CD4-positive, alpha-beta T cell (primary cell): ENCODE measurements at regions of chr18 and their contacts with region 1.

Region 1: DNA sequence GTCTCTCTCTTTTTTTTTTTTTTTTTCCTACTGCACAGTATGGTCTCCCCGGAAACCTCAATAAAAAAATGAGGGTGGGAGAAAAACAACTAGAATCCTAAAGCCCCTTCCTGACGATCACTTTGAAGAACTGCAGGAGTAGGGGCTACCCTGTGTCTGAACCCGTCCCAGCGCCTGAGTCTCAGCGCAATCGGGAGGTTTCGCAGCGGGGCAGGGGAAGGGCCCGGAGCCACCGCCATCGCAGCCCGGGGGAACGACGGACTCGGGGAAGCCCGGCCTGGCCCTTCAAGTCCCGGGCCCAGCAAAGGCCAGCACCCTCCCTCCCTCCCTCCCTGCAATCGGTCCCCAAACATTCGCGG is 411 bp downstream of the NARS1 start:
- DNase-seq: peak in 2 of 14 experiments; percentile 11 to 13
- ATAC-seq: peak; percentile 11
- H3K4me3 ChIP-seq: peak overlapping the region; percentile 91
- H3K4me3 Mint-ChIP-seq: peak overlapping the region; percentile 95
- H3K27ac ChIP-seq: peak overlapping the region; percentile 70 to 91
- H3K27ac Mint-ChIP-seq: peak overlapping the region; percentile 98
- H3K4me1 ChIP-seq: peaks cover 33% of the 10 kb centered on the region
- H3K4me1 Mint-ChIP-seq: peaks cover 33% of the 10 kb centered on the region
- H3K27me3 ChIP-seq: no peaks in the 10 kb centered on the region
- H3K27me3 Mint-ChIP-seq: no peaks in the 10 kb centered on the region
- CTCF ChIP-seq: no peak

Region 2: DNA sequence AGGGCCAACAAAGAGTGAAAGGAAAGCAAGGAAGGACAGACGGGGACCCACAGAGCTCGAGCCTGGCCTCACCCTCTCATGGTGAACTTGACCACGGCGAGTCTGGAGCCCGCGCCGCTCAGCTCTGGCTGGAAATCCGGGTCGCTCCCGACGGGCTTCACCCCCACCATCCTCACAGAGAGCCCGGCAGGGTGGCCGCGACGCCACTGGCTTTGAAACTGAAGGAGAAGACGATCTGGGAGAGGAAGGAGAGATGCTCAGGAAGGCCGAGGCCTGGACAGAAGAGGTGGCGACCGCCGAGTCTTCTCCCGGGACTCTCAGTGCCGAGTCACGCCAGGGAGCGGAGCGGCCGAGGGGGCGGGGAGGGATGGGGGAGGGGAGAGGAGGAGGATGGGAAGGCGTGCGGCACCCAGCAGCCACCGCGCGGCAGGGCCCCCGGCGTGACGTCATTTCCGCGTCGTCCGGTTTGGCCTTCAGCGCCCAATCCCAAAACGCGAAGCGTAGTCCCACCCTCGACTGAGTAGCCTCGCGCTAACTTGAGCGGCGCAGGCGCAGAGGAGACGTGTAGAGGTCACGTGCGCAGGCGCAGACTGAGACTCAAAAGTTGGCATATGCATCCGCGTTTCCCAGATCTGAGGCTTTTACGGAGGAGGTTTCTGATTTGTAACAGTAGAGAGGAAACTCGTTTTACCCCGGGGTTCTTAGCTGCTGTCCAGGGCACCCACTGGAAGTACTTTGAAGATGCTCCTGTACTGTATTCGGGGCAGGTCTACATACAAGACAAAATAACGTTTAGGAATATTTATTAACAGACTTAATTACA is 982.7 kb before region 1 on chr18 and contains the start of gene TXNL1:
- CTCF ChIA-PET with region 1: no interaction called
- POLR2A ChIA-PET with region 1: interaction called, 3 read pairs
- intact Hi-C with region 1: loop called in 1 of 2 experiments (anchors 5 kb)
- DNase-seq: peak; percentile 97 to 100 (median 99)
- ATAC-seq: peak; percentile 95
- H3K4me3 ChIP-seq: peak within 1 kb of the TSS; percentile 94
- H3K4me3 Mint-ChIP-seq: peak within 1 kb of the TSS; percentile 95
- H3K27ac ChIP-seq: peak within 1 kb of the TSS; percentile 83 to 91
- H3K27ac Mint-ChIP-seq: peak within 1 kb of the TSS; percentile 92
- H3K4me1 ChIP-seq: peaks cover 16% of the 10 kb centered on the region
- H3K4me1 Mint-ChIP-seq: peaks cover 52% of the 10 kb centered on the region
- H3K27me3 ChIP-seq: no peaks in the 10 kb centered on the region
- H3K27me3 Mint-ChIP-seq: no peaks in the 10 kb centered on the region
- CTCF ChIP-seq: no peak
- total RNA-seq, gene TXNL1: 41.5 to 41.6 TPM

Region 3: GRCh38 chr18:56645415-56646016 is 975.7 kb before region 1 on chr18:
- CTCF ChIA-PET with region 1: no interaction called
- POLR2A ChIA-PET with region 1: interaction called, 8 read pairs
- intact Hi-C with region 1: loop called in 1 of 2 experiments (anchors 5 kb)
- DNase-seq: peak in 3 of 14 experiments; percentile 54 to 60 (median 56)
- ATAC-seq: peak; percentile 51
- H3K4me3 ChIP-seq: no peak overlapping the region
- H3K4me3 Mint-ChIP-seq: no peak overlapping the region
- H3K27ac ChIP-seq: no peak overlapping the region
- H3K27ac Mint-ChIP-seq: no peak overlapping the region
- H3K4me1 ChIP-seq: peaks cover 5% of the 10 kb centered on the region
- H3K4me1 Mint-ChIP-seq: peaks cover 7% of the 10 kb centered on the region
- H3K27me3 ChIP-seq: no peaks in the 10 kb centered on the region
- H3K27me3 Mint-ChIP-seq: no peaks in the 10 kb centered on the region
- CTCF ChIP-seq: peak; percentile 73

Region 4: DNA sequence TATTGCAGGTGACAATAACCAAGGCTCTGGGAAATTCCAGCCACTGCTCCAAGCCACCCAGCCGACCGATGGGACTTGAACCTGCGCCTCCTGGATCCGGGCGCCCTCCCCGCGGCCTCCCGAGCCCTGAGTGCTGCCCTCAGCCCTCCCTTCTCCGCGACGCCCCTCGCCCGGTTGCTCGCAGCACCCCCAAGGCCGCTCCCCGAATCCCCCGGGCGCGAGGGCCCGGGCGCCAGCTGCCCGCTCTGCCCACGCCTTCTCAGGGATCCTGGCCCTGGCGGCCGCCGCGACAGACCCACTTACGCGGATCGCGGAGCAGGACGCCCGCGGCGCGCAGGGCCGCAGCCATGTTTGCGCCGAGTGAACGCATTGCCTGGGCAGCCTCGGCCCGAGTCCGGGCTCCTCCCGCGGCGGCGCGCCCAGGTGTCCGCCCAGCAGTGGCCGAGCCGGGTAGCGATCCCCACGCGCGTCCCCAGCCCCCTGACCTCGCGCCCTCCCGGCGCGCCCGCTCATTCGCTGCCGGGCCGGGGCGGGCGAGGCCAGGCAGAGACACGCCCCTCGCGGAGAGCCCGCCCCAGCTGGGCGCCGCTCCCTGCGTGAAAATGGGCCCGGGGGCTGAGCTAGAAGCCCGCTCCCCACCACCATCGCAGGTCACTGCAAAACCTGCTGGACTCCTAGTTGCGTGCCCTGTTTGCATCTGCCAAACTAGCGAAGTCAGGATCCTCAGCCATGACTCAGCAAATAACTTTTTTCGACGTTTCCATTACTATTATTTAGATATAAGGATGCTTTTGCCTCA is 34.8 kb before region 1 on chr18 and contains the start of gene FECH:
- CTCF ChIA-PET with region 1: no interaction called
- POLR2A ChIA-PET with region 1: interaction called, 15 read pairs
- intact Hi-C with region 1: loop called (anchors 1 to 5 kb)
- DNase-seq: peak; percentile 18 to 84 (median 60)
- ATAC-seq: peak; percentile 94
- H3K4me3 ChIP-seq: peak within 1 kb of the TSS; percentile 74
- H3K4me3 Mint-ChIP-seq: peak within 1 kb of the TSS; percentile 93
- H3K27ac ChIP-seq: no peak within 1 kb of the TSS
- H3K27ac Mint-ChIP-seq: peak within 1 kb of the TSS; percentile 76
- H3K4me1 ChIP-seq: peaks cover 17% of the 10 kb centered on the region
- H3K4me1 Mint-ChIP-seq: peaks cover 28% of the 10 kb centered on the region
- H3K27me3 ChIP-seq: no peaks in the 10 kb centered on the region
- H3K27me3 Mint-ChIP-seq: no peaks in the 10 kb centered on the region
- CTCF ChIP-seq: no peak
- total RNA-seq, gene FECH: 7.5 to 8.1 TPM

Region 5: GRCh38 chr18:58128381-58129374 is 507.5 kb after region 1 on chr18:
- CTCF ChIA-PET with region 1: no interaction called
- POLR2A ChIA-PET with region 1: no interaction called
- intact Hi-C with region 1: loop called in 1 of 2 experiments (anchors 10 kb)
- DNase-seq: no peak
- ATAC-seq: no peak
- H3K4me3 ChIP-seq: no peak overlapping the region
- H3K4me3 Mint-ChIP-seq: no peak overlapping the region
- H3K27ac ChIP-seq: no peak overlapping the region
- H3K27ac Mint-ChIP-seq: no peak overlapping the region
- H3K4me1 ChIP-seq: peaks cover 2% of the 10 kb centered on the region
- H3K4me1 Mint-ChIP-seq: no peaks in the 10 kb centered on the region
- H3K27me3 ChIP-seq: no peaks in the 10 kb centered on the region
- H3K27me3 Mint-ChIP-seq: peaks cover 17% of the 10 kb centered on the region
- CTCF ChIP-seq: no peak

Region 6: DNA sequence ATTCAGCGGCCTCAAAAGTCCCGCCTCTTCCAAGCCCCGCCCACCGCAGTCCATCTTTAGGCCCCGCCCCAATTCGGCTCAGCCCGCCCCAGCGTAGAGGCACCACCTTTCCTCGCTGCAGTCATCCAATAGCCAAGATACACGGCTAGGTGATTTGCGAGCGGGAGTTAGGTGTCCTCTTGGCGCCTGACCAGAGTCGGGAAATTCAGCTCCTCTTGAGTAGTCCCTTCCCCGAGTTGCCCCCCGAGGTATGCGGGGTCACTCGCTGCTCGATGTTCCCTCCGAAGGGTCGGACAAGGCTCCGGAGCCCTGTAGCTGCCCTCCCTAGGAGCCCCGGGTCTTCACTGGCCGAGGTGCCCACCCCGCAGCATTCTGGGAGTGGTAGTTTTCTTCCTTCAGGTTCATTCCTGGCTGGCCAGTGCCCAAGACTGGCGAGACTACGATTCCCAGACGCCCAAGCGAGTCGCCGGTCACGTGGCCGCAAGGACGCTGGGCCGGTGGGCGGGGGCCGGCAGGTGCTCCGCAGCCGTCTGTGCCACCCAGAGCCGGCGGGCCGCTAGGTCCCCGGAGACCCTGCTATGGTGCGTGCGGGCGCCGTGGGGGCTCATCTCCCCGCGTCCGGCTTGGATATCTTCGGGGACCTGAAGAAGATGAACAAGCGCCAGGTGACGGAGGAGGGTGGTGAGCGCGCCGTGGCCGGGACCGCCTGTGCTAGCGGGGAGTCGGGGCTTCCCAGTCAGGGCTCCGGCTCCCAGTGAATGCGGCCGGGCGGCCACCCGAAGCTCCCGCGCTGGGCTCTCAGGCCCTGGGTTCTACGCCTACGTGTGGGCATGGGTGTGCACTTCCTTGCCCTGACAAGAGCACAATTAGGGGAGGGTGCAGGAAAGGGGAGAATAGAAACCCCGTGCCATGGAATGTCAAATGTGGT is 1518.4 kb after region 1 on chr18 and contains the start of gene SEC11C:
- CTCF ChIA-PET with region 1: no interaction called
- POLR2A ChIA-PET with region 1: no interaction called
- intact Hi-C with region 1: loop called in 1 of 2 experiments (anchors 5 kb)
- DNase-seq: peak; percentile 91 to 98 (median 94)
- ATAC-seq: peak; percentile 87
- H3K4me3 ChIP-seq: peak within 1 kb of the TSS; percentile 78
- H3K4me3 Mint-ChIP-seq: peak within 1 kb of the TSS; percentile 93
- H3K27ac ChIP-seq: peak within 1 kb of the TSS; percentile 94 to 99
- H3K27ac Mint-ChIP-seq: peak within 1 kb of the TSS; percentile 98
- H3K4me1 ChIP-seq: peaks cover 32% of the 10 kb centered on the region
- H3K4me1 Mint-ChIP-seq: peaks cover 38% of the 10 kb centered on the region
- H3K27me3 ChIP-seq: peaks cover 0 to 9% of the 10 kb centered on the region in 2 experiments
- H3K27me3 Mint-ChIP-seq: peaks cover 18% of the 10 kb centered on the region
- CTCF ChIP-seq: no peak
- total RNA-seq, gene SEC11C: 42.0 to 44.1 TPM

Region 7: DNA sequence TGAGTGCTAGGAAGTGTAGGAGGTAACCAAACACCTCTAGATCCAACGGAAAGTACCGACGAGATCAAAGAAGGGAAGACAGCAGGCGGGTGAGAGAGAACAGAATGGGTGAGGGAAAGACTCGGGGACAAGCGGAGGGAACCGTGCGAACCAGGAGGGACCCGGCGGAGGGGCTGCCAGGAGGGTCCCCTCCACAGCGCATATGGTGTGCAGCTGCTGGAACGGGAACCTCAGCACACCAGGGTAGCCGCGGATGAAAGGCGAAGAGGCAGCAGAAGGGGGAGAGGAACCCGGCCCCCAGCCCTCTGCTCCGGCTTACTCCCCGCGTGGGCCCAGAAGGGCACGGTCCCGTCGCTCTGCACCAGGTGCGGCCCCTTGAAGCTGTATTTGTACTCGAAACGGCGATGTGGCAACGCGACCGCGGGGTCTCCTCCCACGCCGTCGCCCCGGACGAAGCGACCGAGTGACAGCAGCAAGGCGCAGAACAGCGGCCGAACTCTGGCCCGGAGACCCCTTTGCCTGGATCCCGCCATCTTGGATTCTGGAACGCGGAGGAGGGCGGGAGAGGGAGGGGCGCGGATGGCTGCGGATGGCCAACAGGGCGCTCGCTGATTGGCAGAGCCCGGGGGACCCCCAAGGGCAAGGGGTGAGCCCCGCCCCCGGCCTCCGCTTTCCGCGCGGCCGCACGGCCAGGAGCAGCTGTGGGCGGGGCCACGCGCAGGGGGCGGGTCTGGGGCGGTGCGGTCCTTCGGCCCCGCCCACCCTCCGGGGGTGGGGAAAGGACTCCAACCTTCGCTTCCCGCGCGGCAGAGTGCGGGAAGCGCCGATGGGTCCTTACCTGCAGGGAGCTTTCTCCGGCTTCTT is 1737.7 kb after region 1 on chr18 and contains the start of gene LMAN1:
- CTCF ChIA-PET with region 1: no interaction called
- POLR2A ChIA-PET with region 1: no interaction called
- intact Hi-C with region 1: loop called in 1 of 2 experiments (anchors 10 kb)
- DNase-seq: peak; percentile 76 to 95 (median 88)
- ATAC-seq: peak; percentile 75
- H3K4me3 ChIP-seq: peak within 1 kb of the TSS; percentile 85
- H3K4me3 Mint-ChIP-seq: peak within 1 kb of the TSS; percentile 92
- H3K27ac ChIP-seq: peak within 1 kb of the TSS; percentile 83 to 92
- H3K27ac Mint-ChIP-seq: peak within 1 kb of the TSS; percentile 81
- H3K4me1 ChIP-seq: peaks cover 14% of the 10 kb centered on the region
- H3K4me1 Mint-ChIP-seq: peaks cover 46% of the 10 kb centered on the region
- H3K27me3 ChIP-seq: no peaks in the 10 kb centered on the region
- H3K27me3 Mint-ChIP-seq: no peaks in the 10 kb centered on the region
- CTCF ChIP-seq: no peak
- total RNA-seq, gene LMAN1: 23.9 to 26.1 TPM